Calu3 (cell line): ENCODE measurements at regions of chr17 and their contacts with region 1.

Region 1: DNA sequence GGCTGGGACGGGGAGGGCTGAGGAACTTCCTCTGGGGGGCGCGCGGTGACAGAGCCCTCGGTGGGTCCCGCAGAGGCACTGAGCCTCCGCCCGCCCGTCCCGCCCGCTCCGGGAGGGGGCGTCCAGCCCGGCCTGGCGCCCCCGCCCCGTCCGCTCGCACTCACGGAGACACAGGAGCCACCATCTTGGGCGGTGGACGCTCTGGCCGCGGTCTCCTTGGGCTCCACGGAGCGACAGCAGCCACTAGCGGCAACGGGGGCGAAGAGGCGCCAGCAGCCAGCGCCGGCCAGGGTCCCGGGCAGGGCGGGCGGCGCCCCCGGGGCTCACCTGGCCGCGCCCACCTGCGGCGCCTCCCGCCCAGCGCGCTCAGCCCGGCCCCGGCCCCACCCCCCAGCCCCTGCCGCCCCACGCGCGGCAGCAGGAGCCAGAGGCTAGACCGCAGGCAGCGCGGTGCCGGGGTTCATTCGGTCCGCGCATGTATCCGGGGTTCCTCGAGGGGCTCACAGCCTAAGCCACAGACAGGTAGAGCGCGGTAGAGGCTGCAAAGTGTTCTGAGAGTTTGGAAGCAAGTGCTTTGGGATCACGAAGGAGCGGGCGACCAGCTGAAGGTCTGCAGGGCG is at the start of gene C17orf113:
- DNase-seq: peak; percentile 85
- H3K4me3 Mint-ChIP-seq: peak within 1 kb of the TSS; percentile 76
- H3K27ac Mint-ChIP-seq: peak within 1 kb of the TSS; percentile 40
- H3K4me1 Mint-ChIP-seq: peaks cover 7% of the 10 kb centered on the region
- H3K27me3 Mint-ChIP-seq: peaks cover 44% of the 10 kb centered on the region
- CTCF ChIP-seq: peak; percentile 69
- total RNA-seq, gene C17orf113: 4.2 and 4.5 TPM in 2 replicates

Region 2: GRCh38 chr17:42618442-42619150 is 568.1 kb after region 1 on chr17:
- CTCF ChIA-PET with region 1: interaction called, 12 read pairs
- intact Hi-C with region 1: no loop called
- DNase-seq: peak; percentile 78
- H3K4me3 Mint-ChIP-seq: no peak overlapping the region
- H3K27ac Mint-ChIP-seq: no peak overlapping the region
- H3K4me1 Mint-ChIP-seq: peaks cover 15% of the 10 kb centered on the region
- H3K27me3 Mint-ChIP-seq: no peaks in the 10 kb centered on the region
- CTCF ChIP-seq: peak; percentile 49